Activated CD4-positive, alpha-beta T cell treated with anti-CD3 and anti-CD28 coated beads for 36 hours (primary cell): ENCODE measurements at regions of chr4 and their contacts with region 1.

Region 1: DNA sequence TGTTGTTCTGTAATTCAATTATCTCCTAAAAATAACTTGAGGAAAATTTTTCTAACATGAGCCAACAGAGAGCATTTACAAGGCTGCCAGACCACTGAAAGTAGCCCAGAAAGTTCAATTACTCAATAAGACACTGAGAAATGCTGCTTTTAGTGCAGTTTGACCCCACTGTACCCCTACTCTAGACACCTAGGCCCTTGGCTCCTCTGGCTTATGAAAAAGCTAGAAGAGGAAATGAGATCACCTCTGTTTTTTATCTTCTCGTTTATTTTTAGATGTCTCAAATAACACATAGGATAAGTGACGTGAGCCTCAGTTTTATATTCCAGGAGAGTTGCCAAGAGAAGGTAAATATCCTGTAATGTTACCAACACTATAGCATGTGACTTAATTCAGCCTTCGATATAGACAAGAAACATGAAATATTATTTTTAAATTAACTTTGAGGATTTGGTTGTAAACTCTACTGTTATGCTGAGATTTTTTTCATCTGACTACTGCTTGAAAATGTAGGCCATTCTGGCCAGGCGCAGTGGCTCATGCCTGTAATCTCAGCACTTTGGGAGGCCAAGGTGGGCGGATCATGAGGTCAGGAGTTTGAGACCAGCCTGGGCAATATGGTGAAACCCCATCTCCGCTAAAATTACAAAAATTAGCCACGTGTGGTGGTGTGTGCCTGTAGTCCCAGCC is 24.4 kb downstream of the TNIP3 start:
- DNase-seq: no peak
- ATAC-seq: peak; percentile 52
- H3K4me3 Mint-ChIP-seq: no peak overlapping the region
- H3K27ac Mint-ChIP-seq: peak overlapping the region; percentile 42
- H3K4me1 Mint-ChIP-seq: peaks cover 53% of the 10 kb centered on the region
- H3K27me3 Mint-ChIP-seq: no peaks in the 10 kb centered on the region

Region 2: DNA sequence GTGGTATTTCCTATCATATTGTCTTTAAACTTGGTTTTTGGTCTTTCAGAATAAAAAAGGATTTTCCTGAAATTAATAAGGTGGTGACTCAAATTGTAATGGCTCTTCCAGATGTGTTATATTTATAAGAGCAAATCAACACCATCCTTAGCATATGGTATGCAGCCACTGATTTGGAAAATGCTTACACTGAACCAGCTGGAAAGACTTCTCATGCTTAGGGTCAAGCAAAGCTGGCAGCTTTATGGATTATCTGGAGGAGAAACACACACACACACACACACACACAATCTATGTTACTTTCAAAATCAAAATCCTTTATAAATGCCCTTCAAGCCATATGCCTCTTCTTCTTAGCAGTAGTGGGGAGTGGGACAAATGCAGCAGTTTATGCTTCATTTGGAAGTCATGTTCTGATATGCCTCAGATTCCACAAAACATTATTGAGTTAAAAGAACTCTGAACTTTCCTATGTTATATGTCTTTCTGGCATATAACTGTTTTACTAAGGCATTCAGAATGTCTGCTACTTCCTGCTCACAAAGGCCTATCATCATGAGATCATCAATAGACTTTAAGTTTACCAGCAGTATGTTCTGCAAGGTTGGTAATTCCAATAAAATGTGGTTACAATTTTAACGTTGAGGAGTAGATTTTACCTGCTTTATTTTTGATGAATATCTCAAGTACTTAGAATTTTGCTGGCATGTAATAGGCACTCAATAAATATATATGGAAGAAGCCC is 144.2 kb before region 1 on chr4:
- CTCF ChIA-PET with region 1: no interaction called
- POLR2A ChIA-PET with region 1: no interaction called
- intact Hi-C with region 1: no loop called
- DNase-seq: no peak
- ATAC-seq: no peak
- H3K4me3 Mint-ChIP-seq: no peak overlapping the region
- H3K27ac Mint-ChIP-seq: no peak overlapping the region
- H3K4me1 Mint-ChIP-seq: peaks cover 4% of the 10 kb centered on the region
- H3K27me3 Mint-ChIP-seq: no peaks in the 10 kb centered on the region

Region 3: DNA sequence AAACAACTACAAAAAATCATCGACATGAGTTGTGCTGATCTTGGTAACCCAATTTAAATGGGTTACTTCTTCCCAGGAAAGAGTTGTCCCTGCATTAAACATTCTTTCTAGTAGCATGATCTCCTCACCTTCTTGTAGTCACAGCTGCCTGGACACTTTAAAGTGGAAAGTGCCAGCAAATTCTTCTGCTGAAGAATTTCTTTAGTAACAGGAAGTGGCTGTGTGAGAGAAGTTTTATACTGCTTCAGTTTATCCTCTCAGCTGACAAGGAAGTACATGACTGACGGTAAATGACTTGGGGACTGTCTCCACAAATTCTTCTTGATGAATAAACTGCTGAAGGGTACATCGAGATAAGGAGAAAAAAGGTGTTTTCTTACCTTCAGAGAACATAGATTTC is 42.6 kb after region 1 on chr4:
- CTCF ChIA-PET with region 1: interaction called, 3 read pairs
- POLR2A ChIA-PET with region 1: no interaction called
- intact Hi-C with region 1: loop called in 1 of 2 experiments (anchors 5 kb)
- DNase-seq: peak; percentile 20
- ATAC-seq: peak; percentile 57
- H3K4me3 Mint-ChIP-seq: peak overlapping the region; percentile 73
- H3K27ac Mint-ChIP-seq: peak overlapping the region; percentile 93
- H3K4me1 Mint-ChIP-seq: peaks cover 70% of the 10 kb centered on the region
- H3K27me3 Mint-ChIP-seq: no peaks in the 10 kb centered on the region